ENCODE measurements at regions of chr11 and their contacts with region 1.

Region 1: DNA sequence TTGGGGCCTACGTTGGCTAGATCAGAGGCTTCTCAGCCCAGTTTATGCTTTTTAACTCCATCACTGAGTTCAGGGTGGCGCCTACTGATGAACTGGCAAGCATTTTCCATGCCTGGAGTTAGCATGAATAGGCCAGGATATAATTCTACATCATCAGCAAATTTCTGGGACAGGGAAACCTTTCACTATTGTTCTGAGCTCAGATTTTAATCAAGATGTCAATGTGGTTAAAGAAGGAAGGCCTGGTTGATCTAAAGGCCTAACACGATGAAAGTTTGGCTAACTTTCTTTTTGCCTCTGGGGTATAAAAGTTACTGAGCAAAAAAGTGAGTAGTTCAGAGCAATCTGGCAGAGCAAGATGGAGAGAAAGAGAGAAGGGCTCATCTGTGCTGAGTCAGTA is 21.7 kb upstream of the IFITM3 start:
- DNase-seq: no peak
- ATAC-seq: no peak
- H3K4me3 Mint-ChIP-seq: no peak overlapping the region
- H3K27ac Mint-ChIP-seq: no peak overlapping the region
- H3K4me1 Mint-ChIP-seq: peaks cover 16% of the 10 kb centered on the region
- H3K27me3 Mint-ChIP-seq: no peaks in the 10 kb centered on the region
- CTCF ChIP-seq: no peak

Region 2: DNA sequence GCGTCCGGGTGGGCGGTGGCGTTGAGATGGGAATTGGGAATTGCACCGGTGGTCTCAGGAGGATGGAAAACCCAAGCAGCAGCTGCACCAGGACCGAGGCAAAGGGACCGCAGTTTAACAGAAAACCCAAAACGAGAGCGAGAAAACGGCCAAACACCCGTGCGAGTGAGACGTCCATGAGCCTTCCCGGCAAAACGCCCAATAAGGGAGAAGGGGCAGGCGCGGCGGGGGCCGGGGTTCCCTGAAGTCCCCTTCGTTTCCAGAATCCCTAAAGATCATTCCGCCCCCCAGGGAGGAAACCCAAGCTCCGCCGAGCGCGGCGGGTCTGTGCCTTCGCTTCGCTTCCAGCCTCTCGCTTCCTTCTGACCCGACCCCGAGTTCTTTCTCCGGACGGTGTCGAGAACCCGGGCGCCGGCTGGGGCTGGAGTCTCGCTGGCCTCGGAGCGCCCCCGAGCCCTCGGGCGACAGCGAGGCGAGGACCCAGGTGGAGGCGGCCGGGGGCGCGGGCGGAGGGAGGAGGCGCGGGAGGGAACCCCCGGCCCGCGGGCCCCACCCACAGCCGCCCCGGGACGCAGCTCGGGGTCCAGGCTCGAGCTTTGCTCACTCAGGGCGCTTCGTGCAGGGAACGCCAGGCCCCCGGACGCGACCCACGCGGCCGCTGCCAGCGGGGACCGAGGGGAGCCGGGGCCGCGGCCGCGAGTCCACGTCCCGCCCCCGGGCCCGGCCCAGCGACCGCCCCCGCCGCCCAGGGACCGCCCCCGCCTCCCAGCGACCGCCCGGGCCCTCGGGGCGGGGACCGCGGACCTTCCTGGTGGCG is 53.8 kb before region 1 on chr11 and contains the start of gene PGGHG:
- CTCF ChIA-PET with region 1: no interaction called
- POLR2A ChIA-PET with region 1: no interaction called
- intact Hi-C with region 1: no loop called
- DNase-seq: peak; percentile 56
- ATAC-seq: peak; percentile 14
- H3K4me3 Mint-ChIP-seq: peak within 1 kb of the TSS; percentile 97
- H3K27ac Mint-ChIP-seq: peak within 1 kb of the TSS; percentile 98
- H3K4me1 Mint-ChIP-seq: peaks cover 51% of the 10 kb centered on the region
- H3K27me3 Mint-ChIP-seq: no peaks in the 10 kb centered on the region
- CTCF ChIP-seq: no peak
- total RNA-seq, gene PGGHG: 298 to 308 TPM

Region 3: DNA sequence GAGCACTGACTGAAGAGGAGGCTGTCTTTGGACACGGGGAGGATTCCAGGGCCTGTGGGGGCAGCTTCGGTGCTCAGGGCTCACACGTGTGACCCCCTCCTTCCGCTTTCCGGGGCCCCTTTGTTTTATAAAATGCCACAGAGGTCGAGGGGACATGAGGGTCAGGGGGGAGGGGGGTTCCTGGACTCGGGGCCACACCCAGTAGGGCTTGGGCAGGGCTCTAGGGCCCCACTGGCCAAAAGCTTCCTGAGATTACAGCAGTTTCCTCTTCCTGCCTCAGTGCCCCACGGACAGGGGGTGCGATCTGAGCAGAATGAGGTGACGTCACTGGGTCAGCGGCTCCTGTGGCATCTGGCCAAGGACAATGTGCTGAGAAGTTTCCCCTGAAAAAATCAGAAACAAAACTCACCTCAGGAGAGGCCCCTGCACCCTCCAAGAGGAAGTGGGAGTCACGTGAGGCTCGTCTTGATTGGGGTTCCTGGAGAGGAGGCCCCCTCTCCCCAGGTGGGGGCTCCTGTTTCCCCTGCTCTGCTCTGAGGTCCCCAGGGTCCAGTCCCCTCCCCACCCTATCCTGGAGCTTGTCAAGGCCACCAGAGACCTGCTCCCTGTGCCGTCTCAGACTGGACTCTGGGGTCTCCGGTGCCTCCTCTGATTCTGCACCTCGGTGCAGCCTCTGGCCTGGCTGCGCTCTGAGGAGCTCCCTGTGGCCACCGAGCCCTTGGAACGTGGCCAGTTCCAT is 15.3 kb before region 1 on chr11:
- CTCF ChIA-PET with region 1: interaction called, 12 read pairs
- POLR2A ChIA-PET with region 1: interaction called, 23 read pairs
- intact Hi-C with region 1: no loop called
- DNase-seq: peak; percentile 94
- ATAC-seq: peak; percentile 62
- H3K4me3 Mint-ChIP-seq: peak overlapping the region; percentile 72
- H3K27ac Mint-ChIP-seq: peak overlapping the region; percentile 99
- H3K4me1 Mint-ChIP-seq: peaks cover 73% of the 10 kb centered on the region
- H3K27me3 Mint-ChIP-seq: no peaks in the 10 kb centered on the region
- CTCF ChIP-seq: no peak

Region 4: DNA sequence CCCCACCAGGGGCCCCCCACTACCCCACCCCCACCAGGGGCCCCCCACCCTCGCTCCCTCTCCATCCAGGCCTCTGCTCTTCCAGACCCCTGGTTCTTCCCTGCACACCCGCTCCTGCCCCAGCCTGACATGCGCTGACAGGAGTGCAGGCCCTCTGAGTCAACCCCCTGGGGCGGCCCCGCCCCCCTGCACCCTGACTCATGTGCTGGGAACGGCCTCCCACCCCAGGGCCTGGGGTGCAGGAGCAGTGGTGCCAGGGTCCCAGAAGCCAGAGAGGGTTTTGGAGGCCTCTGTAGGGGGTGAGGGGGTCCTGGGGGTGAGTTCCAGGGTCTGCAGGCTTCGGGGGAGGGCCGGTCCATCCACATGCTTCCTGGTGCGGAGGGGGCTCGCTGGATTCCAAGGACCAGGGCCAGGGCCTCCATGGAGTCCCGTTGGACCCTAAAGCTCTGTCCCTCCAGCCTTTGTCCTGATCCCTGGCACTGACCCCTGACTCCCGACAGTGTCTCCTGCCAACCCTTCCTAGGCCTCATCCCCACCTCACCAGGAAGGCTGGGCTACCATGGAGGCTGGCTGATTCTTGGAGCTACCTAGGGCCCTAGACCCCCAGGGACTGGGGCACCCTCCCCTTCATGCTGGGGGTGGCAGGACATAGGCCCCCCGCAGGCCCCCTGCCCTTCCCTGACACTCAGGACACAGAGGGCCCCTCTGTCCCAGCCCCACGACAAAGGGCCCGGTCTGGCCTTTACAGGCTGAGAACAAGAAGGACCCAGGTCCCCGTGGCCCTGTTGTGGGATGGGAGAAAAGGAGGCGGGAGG is 51.1 kb after region 1 on chr11:
- CTCF ChIA-PET with region 1: no interaction called
- POLR2A ChIA-PET with region 1: no interaction called
- intact Hi-C with region 1: no loop called
- DNase-seq: peak; percentile 45
- ATAC-seq: peak; percentile 22
- H3K4me3 Mint-ChIP-seq: no peak overlapping the region
- H3K27ac Mint-ChIP-seq: no peak overlapping the region
- H3K4me1 Mint-ChIP-seq: peaks cover 5% of the 10 kb centered on the region
- H3K27me3 Mint-ChIP-seq: no peaks in the 10 kb centered on the region
- CTCF ChIP-seq: no peak

Region 5: DNA sequence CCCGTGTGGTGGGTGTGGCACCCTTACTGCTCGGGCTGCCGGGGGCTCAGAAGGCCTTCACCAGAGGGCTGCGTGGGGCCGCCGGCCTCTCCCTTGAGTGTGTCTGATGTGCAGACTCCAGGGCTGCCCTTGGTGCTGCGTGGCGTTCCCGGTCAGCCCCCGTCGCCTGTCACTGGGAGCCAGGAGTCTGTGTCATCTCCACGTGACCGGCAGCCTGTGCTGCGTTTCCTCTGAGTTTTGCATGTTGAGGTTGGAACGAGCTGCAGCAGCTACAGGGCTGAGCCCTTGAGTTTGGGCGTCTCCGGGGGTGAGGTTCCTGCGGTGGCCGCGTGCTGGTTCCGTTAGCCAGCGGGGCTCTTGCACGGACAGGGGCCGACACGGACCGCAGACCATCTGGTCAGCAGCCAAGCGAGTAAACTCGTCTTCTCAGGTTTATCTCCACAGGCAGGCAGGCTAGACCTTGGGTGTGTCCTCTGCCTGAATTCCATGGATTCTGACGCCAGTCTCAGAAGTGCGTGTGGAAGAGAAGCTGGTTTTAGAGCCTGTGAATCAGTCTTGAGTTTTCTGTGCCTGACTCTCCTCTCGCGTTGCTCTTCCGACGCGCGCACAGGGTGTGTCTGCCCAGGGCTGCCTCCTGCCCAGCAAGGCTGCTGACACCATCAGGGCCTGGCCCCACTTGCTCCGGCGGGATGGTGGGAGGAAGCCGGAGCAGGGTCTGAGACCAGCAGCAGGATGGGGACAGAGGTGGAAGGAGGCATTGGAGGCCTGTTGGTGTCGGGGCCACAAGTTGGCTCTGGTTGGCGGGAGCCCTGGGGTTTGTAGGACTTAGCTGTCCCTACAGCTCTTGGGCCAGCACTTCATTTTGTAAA is 118.2 kb after region 1 on chr11:
- CTCF ChIA-PET with region 1: no interaction called
- POLR2A ChIA-PET with region 1: no interaction called
- intact Hi-C with region 1: no loop called
- DNase-seq: no peak
- ATAC-seq: no peak
- H3K4me3 Mint-ChIP-seq: no peak overlapping the region
- H3K27ac Mint-ChIP-seq: no peak overlapping the region
- H3K4me1 Mint-ChIP-seq: peaks cover 23% of the 10 kb centered on the region
- H3K27me3 Mint-ChIP-seq: no peaks in the 10 kb centered on the region
- CTCF ChIP-seq: no peak

Measured in activated CD8-positive, alpha-beta T cell treated with anti-CD3 and anti-CD28 coated beads for 36 hours (primary cell).